Activated T-helper 2 cell treated with anti-CD3 and anti-CD28 coated beads, Interferon-gamma antibody, Interleukin-2, Interleukin-4, amounts not matched to agents 10 μg/mL and 5 μg/mL and 100 μg/mL, durations not matched to agents 14 hours and 24 hours and 36 hours (primary cell): ENCODE measurements at regions of chr20 and their contacts with region 1.

Region 1: GRCh38 chr20:35619196-35620095 is 3.8 kb downstream of the SPAG4 start:
- DNase-seq: peak; percentile 72
- H3K4me3 Mint-ChIP-seq: peak overlapping the region; percentile 84
- H3K27ac Mint-ChIP-seq: peak overlapping the region; percentile 87
- H3K4me1 Mint-ChIP-seq: peaks cover 22% of the 10 kb centered on the region
- H3K27me3 Mint-ChIP-seq: no peaks in the 10 kb centered on the region

Region 2: DNA sequence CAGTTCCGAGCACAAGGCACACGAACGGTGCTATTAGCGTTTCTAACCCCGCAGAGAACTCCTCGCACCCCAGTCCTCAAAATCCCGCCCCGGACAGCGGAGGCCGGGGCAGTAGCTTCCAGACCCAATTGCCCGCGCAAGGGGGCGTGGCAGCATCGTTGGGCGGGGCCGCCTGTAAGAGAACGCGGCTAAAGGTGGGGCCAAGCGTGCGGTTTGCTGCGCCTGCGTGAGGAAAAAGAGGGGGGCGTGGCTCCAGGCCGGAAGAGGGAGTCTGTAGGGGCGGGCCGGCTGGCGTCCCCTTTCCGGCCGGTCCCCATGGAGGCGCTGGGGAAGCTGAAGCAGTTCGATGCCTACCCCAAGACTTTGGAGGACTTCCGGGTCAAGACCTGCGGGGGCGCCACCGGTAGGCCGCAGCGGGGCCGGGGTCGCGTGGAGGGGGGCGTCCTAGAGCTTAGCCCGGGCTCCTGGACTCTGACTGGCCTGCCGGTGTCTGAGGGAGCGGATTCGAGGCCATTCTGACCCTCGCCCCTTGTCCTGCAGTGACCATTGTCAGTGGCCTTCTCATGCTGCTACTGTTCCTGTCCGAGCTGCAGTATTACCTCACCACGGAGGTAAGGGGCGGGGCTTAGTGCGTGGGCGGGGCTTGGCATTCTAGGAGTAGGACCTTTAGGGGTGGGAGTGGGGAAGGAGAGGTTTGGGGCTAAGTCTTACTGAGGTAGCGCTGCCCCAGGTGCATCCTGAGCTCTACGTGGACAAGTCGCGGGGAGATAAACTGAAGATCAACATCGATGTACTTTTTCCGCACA is 77.5 kb before region 1 on chr20 and contains the start of gene ERGIC3:
- intact Hi-C with region 1: loop called (anchors 2 kb)
- DNase-seq: peak; percentile 96
- H3K4me3 Mint-ChIP-seq: peak within 1 kb of the TSS; percentile 89
- H3K27ac Mint-ChIP-seq: peak within 1 kb of the TSS; percentile 90
- H3K4me1 Mint-ChIP-seq: peaks cover 12% of the 10 kb centered on the region
- H3K27me3 Mint-ChIP-seq: no peaks in the 10 kb centered on the region
- total RNA-seq, gene ERGIC3: 141 and 143 TPM in 2 replicates

Region 3: DNA sequence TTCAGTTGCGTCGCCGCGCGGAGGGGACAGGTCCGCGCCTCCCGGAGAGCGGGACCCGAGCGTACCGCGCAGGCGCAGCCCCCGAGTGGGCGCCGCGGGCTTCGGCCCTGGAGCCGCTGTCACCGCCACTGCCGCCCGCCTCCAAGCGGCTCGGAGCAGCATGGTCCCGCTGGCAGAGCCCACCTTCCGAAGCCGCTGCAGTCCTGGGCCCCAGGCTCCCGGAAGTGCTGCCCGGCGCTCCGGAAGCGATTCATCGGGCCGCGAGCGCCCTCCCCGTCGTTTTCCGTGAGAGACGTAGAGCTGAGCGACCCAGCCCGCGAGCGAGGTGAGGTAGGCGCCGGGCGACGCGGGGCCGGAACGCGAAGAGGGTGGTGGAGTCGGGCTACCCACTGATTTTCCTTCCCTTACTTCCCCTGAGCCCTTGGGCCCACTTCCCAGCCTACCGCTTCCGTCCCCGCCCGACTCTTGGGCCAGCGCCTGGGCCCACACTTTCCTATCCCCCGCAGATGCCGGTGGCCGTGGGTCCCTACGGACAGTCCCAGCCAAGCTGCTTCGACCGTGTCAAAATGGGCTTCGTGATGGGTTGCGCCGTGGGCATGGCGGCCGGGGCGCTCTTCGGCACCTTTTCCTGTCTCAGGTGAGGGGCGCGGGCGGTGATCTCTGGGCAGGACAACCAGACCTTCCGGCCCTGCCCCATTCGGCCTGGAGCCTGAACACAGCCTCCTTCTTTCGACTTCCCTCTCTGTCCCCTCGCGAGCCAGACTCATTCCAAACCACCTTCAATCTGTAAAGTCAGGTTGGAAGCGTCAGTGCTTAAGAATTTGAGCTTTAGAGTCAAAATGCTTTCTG is 79.9 kb after region 1 on chr20 and contains the starts of genes NFS1 and ROMO1:
- intact Hi-C with region 1: loop called (anchors 2 kb)
- DNase-seq: peak; percentile 82
- H3K4me3 Mint-ChIP-seq: peak within 1 kb of the TSS; percentile 94
- H3K27ac Mint-ChIP-seq: peak within 1 kb of the TSS; percentile 94
- H3K4me1 Mint-ChIP-seq: peaks cover 31% of the 10 kb centered on the region
- H3K27me3 Mint-ChIP-seq: no peaks in the 10 kb centered on the region
- total RNA-seq, gene NFS1: 39.1 and 39.8 TPM in 2 replicates
- total RNA-seq, gene ROMO1: 93.0 and 98.4 TPM in 2 replicates

Region 4: GRCh38 chr20:35771689-35772562 is 152.5 kb after region 1 on chr20 and contains the start of gene PHF20:
- intact Hi-C with region 1: loop called (anchors 5 kb)
- DNase-seq: peak; percentile 98
- H3K4me3 Mint-ChIP-seq: peak within 1 kb of the TSS; percentile 88
- H3K27ac Mint-ChIP-seq: peak within 1 kb of the TSS; percentile 87
- H3K4me1 Mint-ChIP-seq: peaks cover 46% of the 10 kb centered on the region
- H3K27me3 Mint-ChIP-seq: no peaks in the 10 kb centered on the region
- total RNA-seq, gene PHF20: 55.1 and 64.3 TPM in 2 replicates

Region 5: DNA sequence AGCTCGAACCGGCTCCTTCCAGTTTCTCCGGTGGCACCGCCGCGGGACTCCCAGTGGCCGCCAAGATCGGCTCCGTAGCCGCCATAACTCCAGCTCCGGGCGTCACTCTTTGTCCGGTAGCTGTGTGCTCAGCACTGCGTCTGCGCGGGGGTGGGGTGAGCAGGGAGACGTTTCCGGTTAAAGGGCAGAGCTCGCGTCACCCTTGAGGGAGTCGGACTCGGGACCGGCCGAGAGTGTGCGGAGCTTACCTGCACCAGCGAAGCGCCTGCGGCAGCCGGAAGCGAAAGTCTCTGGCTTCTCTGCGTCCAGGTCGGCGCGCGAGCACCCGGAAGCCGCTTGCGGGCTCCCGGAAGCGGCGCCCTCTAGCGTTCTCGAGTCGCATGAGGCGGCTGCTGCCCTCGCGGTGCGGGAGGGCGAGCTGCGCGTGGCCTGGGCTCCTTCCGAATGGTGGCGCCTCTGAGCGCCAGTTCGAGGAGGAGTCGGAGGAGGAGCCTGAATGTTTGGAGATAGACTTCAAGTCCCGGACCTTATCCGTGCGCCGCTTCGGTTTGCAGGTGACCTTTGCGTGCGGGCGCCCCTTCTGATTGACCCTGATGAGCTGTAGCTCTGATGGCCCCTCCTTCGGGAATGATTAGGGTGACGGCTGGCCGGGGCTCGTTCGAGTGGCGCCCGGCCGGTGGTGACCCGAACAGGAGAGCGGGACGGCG is 334.9 kb after region 1 on chr20 and contains the start of gene SCAND1:
- intact Hi-C with region 1: loop called (anchors 5 kb)
- DNase-seq: peak; percentile 97
- H3K4me3 Mint-ChIP-seq: peak within 1 kb of the TSS; percentile 100
- H3K27ac Mint-ChIP-seq: peak within 1 kb of the TSS; percentile 100
- H3K4me1 Mint-ChIP-seq: peaks cover 13% of the 10 kb centered on the region
- H3K27me3 Mint-ChIP-seq: no peaks in the 10 kb centered on the region
- total RNA-seq, gene SCAND1: 39.5 and 40.3 TPM in 2 replicates